ENCODE measurements at regions of chr3 and their contacts with region 1.

Region 1: GRCh38 chr3:120742198-120742849 is at the starts of genes GTF2E1 and RABL3:
- DNase-seq: peak; percentile 95
- H3K4me3 Mint-ChIP-seq: peak within 1 kb of the TSS; percentile 84
- H3K27ac Mint-ChIP-seq: peak within 1 kb of the TSS; percentile 89
- H3K4me1 Mint-ChIP-seq: peaks cover 22% of the 10 kb centered on the region
- H3K27me3 Mint-ChIP-seq: no peaks in the 10 kb centered on the region
- total RNA-seq, gene GTF2E1: 25.3 and 29.2 TPM in 2 replicates
- total RNA-seq, gene RABL3: 24.3 and 25.6 TPM in 2 replicates

Region 2: GRCh38 chr3:120596116-120596852 is 146.0 kb before region 1 on chr3 and contains the start of gene NDUFB4:
- intact Hi-C with region 1: loop called (anchors 1 kb)
- DNase-seq: peak; percentile 94
- H3K4me3 Mint-ChIP-seq: peak within 1 kb of the TSS; percentile 91
- H3K27ac Mint-ChIP-seq: peak within 1 kb of the TSS; percentile 96
- H3K4me1 Mint-ChIP-seq: peaks cover 15% of the 10 kb centered on the region
- H3K27me3 Mint-ChIP-seq: no peaks in the 10 kb centered on the region
- total RNA-seq, gene NDUFB4: 107 and 108 TPM in 2 replicates

Region 3: DNA sequence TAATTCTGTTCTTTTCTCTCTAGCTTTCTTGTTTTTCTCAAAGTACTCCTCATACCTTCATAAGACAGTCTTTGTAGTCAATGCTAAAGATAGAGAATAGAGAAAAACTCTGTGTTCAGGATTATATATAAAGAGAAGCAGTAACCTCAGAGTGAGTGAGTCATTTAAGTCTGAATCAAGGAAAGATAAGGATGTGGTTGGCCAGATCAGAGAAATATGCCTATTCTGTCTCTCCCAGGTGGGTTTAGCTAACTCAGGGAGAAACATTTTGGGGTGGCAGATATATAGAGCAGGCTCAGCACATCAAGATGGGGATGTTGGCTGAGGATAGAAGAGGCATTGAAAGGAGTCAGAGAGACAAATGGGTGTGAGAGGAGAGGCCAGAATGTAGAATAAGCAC is 31.6 kb after region 1 on chr3:
- intact Hi-C with region 1: loop called (anchors 2 kb)
- DNase-seq: peak; percentile 11
- H3K4me3 Mint-ChIP-seq: no peak overlapping the region
- H3K27ac Mint-ChIP-seq: no peak overlapping the region
- H3K4me1 Mint-ChIP-seq: peaks cover 11% of the 10 kb centered on the region
- H3K27me3 Mint-ChIP-seq: no peaks in the 10 kb centered on the region